ENCODE measurements at regions of chr20 and their contacts with region 1.

Region 1: DNA sequence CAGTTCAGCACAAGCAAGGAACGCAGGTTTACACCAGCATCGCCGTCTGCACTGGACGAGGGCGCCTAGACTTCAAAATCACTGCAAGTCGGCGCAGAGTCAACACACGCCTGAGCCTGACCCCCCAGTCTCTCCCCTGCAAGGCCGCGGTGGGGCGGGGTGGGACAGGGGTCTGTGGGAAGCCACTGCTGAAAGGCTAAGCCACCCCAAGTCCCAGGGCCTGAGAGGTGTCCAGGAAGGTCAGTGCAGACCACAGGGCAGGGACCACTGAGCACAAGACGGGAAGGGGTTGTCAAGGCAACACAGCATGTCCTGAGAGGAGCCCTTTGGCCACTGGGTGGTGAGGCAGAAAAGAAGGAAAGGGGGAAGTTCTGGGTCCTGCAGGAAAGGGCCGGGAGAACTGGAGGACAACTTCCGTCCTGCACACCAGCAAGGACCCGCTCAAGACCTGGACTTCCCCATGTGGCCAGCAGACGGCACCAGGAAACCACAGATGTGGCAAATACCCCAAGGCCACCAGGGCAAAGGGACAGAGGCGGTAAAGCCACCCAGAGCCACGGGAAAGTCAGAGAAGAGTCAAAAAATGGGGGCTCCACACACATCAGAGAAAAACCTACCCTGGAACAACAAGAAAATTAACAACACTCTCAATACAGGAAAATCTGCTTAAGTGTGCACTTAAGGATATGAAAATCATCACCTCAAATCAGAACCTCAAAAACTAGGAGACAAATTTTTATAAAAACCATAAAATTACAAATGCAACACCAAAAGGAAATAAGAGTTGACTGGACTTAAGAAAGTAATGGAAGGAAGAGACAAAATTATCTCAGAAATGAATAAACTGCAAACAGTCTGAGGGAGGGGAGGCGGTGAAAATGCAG is 84.7 kb downstream of the TAF4 start:
- DNase-seq: peak; percentile 76
- H3K4me3 ChIP-seq: no peak overlapping the region
- H3K27ac ChIP-seq: no peak overlapping the region
- H3K4me1 ChIP-seq: no peaks in the 10 kb centered on the region
- CTCF ChIP-seq: peak; percentile 95

Region 2: GRCh38 chr20:62136283-62137091 is 155.5 kb after region 1 on chr20:
- CTCF ChIA-PET with region 1: no interaction called
- POLR2A ChIA-PET with region 1: no interaction called
- intact Hi-C with region 1: loop called (anchors 2 kb)
- DNase-seq: peak; percentile 82
- H3K4me3 ChIP-seq: no peak overlapping the region
- H3K27ac ChIP-seq: peak overlapping the region; percentile 37
- H3K4me1 ChIP-seq: peaks cover 10% of the 10 kb centered on the region
- CTCF ChIP-seq: peak; percentile 99

Region 3: GRCh38 chr20:62156592-62157386 is 175.8 kb after region 1 on chr20:
- CTCF ChIA-PET with region 1: no interaction called
- POLR2A ChIA-PET with region 1: no interaction called
- intact Hi-C with region 1: loop called (anchors 1 kb)
- DNase-seq: peak; percentile 69
- H3K4me3 ChIP-seq: no peak overlapping the region
- H3K27ac ChIP-seq: no peak overlapping the region
- H3K4me1 ChIP-seq: no peaks in the 10 kb centered on the region
- CTCF ChIP-seq: peak; percentile 81